Activated B cell treated with CpG ODN at 0.5 μM for 24 hours (primary cell): ENCODE measurements at regions of chr11 and their contacts with region 1.

Region 1: DNA sequence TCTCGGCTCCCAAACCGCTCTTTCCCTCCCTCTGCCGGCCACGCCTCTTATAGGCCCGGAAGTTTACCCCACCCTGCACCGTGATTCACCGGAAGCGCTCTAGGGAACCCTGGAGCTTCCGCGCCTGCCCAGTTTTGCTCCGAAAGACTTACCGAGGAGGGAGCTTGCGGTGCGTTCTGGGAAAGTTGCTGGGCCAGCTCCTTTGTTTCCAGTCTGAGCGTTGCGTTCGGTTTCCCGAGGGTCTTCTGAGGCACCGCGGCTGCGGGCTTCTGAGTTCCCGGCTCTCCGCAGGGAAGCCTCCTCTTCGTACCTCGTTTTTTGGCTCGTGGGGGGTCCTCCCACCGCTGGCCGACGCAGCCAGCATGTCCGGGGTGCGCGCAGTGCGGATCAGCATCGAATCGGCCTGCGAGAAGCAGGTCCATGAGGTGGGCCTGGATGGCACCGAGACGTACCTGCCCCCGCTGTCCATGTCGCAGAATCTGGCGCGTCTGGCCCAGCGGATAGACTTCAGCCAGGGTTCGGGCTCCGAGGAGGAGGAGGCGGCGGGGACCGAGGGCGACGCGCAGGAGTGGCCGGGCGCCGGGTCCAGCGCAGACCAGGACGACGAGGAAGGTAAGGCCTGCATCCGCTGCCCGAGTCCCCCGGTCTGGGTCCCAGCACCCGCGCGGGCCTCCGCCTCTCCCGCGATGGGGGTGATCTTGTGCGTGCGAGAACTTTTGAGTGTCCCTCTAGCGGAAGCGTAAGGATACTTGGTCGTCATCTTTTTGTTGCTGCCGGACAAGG is at the start of gene MED17:
- DNase-seq: peak; percentile 75
- ATAC-seq: peak; percentile 93
- H3K4me3 Mint-ChIP-seq: peak within 1 kb of the TSS; percentile 99
- H3K27ac Mint-ChIP-seq: peak within 1 kb of the TSS; percentile 90
- H3K4me1 Mint-ChIP-seq: peaks cover 40% of the 10 kb centered on the region
- H3K27me3 Mint-ChIP-seq: no peaks in the 10 kb centered on the region
- CTCF ChIP-seq: no peak
- total RNA-seq, gene MED17: 47.9 and 55.2 TPM in 2 replicates

Region 2: GRCh38 chr11:93197380-93198214 is 586.7 kb before region 1 on chr11 and contains the start of gene SLC36A4:
- CTCF ChIA-PET with region 1: no interaction called
- POLR2A ChIA-PET with region 1: interaction called, 5 read pairs
- intact Hi-C with region 1: loop called (anchors 2 kb)
- DNase-seq: peak; percentile 85
- ATAC-seq: peak; percentile 86
- H3K4me3 Mint-ChIP-seq: peak within 1 kb of the TSS; percentile 91
- H3K27ac Mint-ChIP-seq: peak within 1 kb of the TSS; percentile 93
- H3K4me1 Mint-ChIP-seq: peaks cover 15% of the 10 kb centered on the region
- H3K27me3 Mint-ChIP-seq: no peaks in the 10 kb centered on the region
- CTCF ChIP-seq: no peak
- total RNA-seq, gene SLC36A4: 14.9 and 17.0 TPM in 2 replicates

Region 3: DNA sequence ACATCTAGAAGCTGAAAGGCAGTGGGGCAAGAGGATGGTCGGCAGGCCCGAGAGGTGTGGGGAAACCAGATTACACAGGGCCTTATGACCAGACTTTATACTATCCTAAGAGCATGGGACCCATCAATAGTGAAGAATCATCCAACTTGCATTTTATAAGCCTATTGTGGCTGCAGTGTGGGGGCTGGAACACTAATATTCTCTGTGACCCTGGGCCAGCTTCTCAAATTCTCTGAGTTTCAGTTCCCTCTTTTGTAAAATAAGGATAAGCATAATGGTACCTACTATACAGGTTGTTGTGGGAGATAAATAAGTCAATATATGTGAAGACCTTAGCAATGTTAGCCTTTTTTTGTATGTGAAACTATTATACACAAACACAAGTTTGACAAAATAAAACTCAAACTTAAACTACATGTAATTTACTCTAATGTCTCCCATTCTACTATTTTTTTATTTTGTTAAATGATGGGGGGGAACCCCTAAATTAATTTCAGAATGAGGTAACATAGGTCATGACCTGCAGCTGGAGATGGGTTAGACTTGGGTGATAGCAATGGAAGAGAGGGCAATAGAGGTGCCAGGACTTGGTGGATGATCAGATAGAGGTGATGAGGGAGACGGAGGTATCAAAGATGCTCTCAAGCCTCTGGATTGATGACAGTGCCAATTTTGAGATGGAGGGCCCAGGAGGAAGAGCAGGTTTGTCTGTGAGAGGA is 271.2 kb before region 1 on chr11:
- CTCF ChIA-PET with region 1: no interaction called
- POLR2A ChIA-PET with region 1: no interaction called
- intact Hi-C with region 1: no loop called
- DNase-seq: no peak
- ATAC-seq: peak; percentile 54
- H3K4me3 Mint-ChIP-seq: no peak overlapping the region
- H3K27ac Mint-ChIP-seq: no peak overlapping the region
- H3K4me1 Mint-ChIP-seq: peaks cover 19% of the 10 kb centered on the region
- H3K27me3 Mint-ChIP-seq: no peaks in the 10 kb centered on the region
- CTCF ChIP-seq: no peak

Region 4: DNA sequence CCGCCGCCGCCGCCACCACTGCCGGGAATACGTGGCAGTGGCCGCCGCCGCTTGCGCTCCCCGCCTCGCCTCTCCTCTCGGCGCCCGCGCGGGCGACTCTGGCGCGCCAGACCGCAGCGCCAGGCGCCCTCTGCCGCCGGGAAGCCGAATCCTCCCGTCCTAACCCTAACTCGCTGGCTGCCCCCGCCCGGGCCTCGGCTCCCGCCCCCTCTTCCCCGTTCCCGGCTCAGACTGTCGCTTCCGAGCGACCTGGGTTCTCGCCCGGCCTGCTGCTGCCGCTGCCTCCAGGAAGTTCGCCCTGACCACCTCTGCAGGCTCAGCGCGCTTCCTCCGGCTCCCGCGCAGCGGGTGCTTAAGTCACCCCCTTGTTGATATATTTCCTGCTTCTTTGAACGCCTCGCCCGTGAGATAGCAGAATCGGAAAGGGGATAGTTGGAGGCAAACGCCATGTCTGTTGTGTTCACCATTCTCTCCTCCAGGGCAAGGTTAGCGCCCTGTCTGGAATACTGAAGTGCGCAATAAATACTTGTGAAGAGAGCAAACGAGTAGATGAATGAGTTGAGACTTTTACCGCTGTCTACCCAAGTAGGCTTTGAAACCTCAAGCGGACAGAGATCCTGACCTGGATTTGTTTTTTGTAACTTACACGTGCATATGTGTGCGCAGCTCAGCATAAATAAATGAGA is 240.9 kb before region 1 on chr11 and contains the start of gene SMCO4:
- CTCF ChIA-PET with region 1: no interaction called
- POLR2A ChIA-PET with region 1: no interaction called
- intact Hi-C with region 1: loop called (anchors 2 kb)
- DNase-seq: peak; percentile 62
- ATAC-seq: peak; percentile 77
- H3K4me3 Mint-ChIP-seq: peak within 1 kb of the TSS; percentile 90
- H3K27ac Mint-ChIP-seq: peak within 1 kb of the TSS; percentile 56
- H3K4me1 Mint-ChIP-seq: peaks cover 13% of the 10 kb centered on the region
- H3K27me3 Mint-ChIP-seq: peaks cover 4% of the 10 kb centered on the region
- CTCF ChIP-seq: no peak
- total RNA-seq, gene SMCO4: 3.2 and 4.6 TPM in 2 replicates

Region 5: GRCh38 chr11:93718057-93718563 is 66.2 kb before region 1 on chr11:
- CTCF ChIA-PET with region 1: no interaction called
- POLR2A ChIA-PET with region 1: interaction called, 13 read pairs
- intact Hi-C with region 1: no loop called
- DNase-seq: no peak
- ATAC-seq: peak; percentile 82
- H3K4me3 Mint-ChIP-seq: peak overlapping the region; percentile 58
- H3K27ac Mint-ChIP-seq: peak overlapping the region; percentile 86
- H3K4me1 Mint-ChIP-seq: peaks cover 33% of the 10 kb centered on the region
- H3K27me3 Mint-ChIP-seq: no peaks in the 10 kb centered on the region
- CTCF ChIP-seq: no peak

Region 6: GRCh38 chr11:93849751-93850593 is 65.6 kb after region 1 on chr11:
- CTCF ChIA-PET with region 1: no interaction called
- POLR2A ChIA-PET with region 1: no interaction called
- intact Hi-C with region 1: no loop called
- DNase-seq: no peak
- ATAC-seq: no peak
- H3K4me3 Mint-ChIP-seq: no peak overlapping the region
- H3K27ac Mint-ChIP-seq: no peak overlapping the region
- H3K4me1 Mint-ChIP-seq: no peaks in the 10 kb centered on the region
- H3K27me3 Mint-ChIP-seq: peaks cover 20% of the 10 kb centered on the region
- CTCF ChIP-seq: no peak

Region 7: GRCh38 chr11:94493281-94494125 is 709.2 kb after region 1 on chr11 and contains the starts of genes ANKRD49 and MRE11:
- CTCF ChIA-PET with region 1: no interaction called
- POLR2A ChIA-PET with region 1: no interaction called
- intact Hi-C with region 1: loop called (anchors 2 kb)
- DNase-seq: peak; percentile 94
- ATAC-seq: peak; percentile 99
- H3K4me3 Mint-ChIP-seq: peak within 1 kb of the TSS; percentile 93
- H3K27ac Mint-ChIP-seq: peak within 1 kb of the TSS; percentile 92
- H3K4me1 Mint-ChIP-seq: peaks cover 39% of the 10 kb centered on the region
- H3K27me3 Mint-ChIP-seq: no peaks in the 10 kb centered on the region
- CTCF ChIP-seq: no peak
- total RNA-seq, gene ANKRD49: 39.5 and 46.5 TPM in 2 replicates
- total RNA-seq, gene MRE11: 39.7 and 40.1 TPM in 2 replicates